ENCODE measurements at regions of chr4 and their contacts with region 1.

Region 1: DNA sequence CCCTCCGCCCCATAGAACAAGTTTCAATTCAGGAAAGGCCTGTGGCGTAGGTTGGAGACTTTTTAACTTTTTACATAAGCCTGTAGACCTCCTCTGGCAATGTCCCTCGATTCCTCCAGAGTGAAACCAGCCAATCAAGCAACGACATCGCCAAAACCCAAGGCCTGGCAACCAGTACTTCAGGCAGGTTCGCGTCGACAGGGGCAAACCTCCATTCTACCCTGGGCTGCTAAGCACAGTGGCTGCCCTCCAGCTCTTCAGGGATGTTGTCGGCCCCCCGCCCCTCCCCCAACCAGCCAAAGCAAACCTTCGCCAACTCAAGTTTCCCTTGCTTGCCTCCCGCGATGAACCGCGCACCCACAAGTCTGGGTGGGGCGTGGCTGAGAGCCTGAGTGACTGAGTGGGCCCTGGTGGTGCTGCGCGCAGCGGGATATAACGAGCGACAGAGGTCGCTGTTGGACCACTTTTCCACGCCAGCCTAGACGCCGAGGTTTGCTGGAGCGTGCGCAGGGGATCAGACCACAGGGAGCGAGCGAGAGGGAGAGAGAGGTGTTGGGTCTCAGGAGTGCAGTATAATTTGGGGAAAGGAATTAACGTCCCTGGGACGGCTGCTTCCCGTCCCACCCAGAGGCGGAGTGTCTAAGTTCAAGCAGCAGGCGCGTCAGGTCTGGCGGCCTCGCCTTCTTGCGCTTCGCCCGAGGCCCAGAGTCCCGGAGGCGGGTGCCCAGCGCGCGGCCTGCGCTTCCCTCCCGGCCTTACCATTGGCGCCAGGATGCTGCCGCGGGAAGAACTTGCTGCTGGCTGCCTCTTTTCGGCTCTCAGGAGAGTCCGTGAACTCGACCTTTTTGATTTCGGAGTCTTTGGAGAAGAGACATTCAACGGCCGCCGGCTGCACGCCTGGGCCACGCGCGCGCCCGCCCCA is 9.0 kb upstream of the PITX2 start:
- DNase-seq: peak; percentile 71 to 81 (median 74)
- ATAC-seq: peak; percentile 86
- H3K4me3 ChIP-seq: no peak overlapping the region
- H3K27ac ChIP-seq: no peak overlapping the region
- H3K4me1 ChIP-seq: peaks cover 25% of the 10 kb centered on the region
- H3K27me3 ChIP-seq: peaks cover 0 to 71% of the 10 kb centered on the region in 2 donors
- CTCF ChIP-seq: peak; percentile 67 to 92 (median 77)
- POLR2A ChIP-seq: no peak

Region 2: GRCh38 chr4:111283061-111283677 is 651.3 kb after region 1 on chr4:
- intact Hi-C with region 1: loop called (anchors 10 kb)
- DNase-seq: peak; percentile 57 to 76 (median 68)
- ATAC-seq: no peak
- H3K4me3 ChIP-seq: no peak overlapping the region
- H3K27ac ChIP-seq: no peak overlapping the region
- H3K4me1 ChIP-seq: no peaks in the 10 kb centered on the region
- H3K27me3 ChIP-seq: no peaks in the 10 kb centered on the region
- CTCF ChIP-seq: peak; percentile 54 to 80 (median 63)
- POLR2A ChIP-seq: no peak

Measured in body of pancreas (tissue), 4 donors.